ENCODE measurements at regions of chr11 and their contacts with region 1.

Region 1: DNA sequence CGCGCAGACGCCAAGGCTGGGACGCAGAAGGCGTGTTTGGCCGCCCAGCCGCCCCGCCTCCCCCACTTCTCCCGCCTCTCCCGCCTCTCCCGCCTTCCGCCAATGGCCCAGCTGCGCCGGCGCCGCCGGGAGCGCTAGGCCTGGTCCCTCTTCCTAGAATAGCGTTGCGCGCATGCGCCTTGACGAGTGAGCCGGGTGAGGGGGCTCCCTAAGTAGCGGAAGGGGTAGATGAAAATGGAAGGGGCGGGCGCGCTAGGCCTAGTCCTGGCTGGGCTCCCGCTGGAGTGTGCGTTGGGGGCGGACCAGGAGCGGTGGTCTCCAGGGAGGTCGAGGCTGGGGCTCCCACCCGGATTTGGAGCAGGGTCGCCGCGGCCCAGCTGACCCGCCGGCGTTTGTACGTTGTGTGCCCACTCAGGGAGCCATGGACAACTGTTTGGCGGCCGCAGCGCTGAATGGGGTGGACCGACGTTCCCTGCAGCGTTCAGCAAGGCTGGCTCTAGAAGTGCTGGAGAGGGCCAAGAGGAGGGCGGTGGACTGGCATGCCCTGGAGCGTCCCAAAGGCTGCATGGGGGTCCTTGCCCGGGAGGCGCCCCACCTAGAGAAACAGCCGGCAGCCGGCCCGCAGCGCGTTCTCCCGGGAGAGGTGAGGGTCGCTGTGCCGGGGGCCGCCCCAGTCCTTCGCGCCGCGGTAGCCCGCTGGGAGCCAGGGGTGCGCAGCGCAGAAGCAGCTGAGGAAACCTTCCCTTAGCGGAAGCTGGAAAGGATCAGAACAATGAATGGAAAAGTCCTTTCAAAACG is at the start of gene AKIP1:
- DNase-seq: peak; percentile 96 to 98
- ATAC-seq: peak; percentile 97 to 98 (median 98)
- H3K4me3 ChIP-seq: peak within 1 kb of the TSS; percentile 99
- H3K27ac ChIP-seq: peak within 1 kb of the TSS; percentile 89
- H3K4me1 ChIP-seq: peaks cover 21% of the 10 kb centered on the region
- H3K27me3 ChIP-seq: no peaks in the 10 kb centered on the region
- CTCF ChIP-seq: no peak
- total RNA-seq, gene AKIP1: 11.3 to 22.7 (median 16.5) TPM

Region 2: DNA sequence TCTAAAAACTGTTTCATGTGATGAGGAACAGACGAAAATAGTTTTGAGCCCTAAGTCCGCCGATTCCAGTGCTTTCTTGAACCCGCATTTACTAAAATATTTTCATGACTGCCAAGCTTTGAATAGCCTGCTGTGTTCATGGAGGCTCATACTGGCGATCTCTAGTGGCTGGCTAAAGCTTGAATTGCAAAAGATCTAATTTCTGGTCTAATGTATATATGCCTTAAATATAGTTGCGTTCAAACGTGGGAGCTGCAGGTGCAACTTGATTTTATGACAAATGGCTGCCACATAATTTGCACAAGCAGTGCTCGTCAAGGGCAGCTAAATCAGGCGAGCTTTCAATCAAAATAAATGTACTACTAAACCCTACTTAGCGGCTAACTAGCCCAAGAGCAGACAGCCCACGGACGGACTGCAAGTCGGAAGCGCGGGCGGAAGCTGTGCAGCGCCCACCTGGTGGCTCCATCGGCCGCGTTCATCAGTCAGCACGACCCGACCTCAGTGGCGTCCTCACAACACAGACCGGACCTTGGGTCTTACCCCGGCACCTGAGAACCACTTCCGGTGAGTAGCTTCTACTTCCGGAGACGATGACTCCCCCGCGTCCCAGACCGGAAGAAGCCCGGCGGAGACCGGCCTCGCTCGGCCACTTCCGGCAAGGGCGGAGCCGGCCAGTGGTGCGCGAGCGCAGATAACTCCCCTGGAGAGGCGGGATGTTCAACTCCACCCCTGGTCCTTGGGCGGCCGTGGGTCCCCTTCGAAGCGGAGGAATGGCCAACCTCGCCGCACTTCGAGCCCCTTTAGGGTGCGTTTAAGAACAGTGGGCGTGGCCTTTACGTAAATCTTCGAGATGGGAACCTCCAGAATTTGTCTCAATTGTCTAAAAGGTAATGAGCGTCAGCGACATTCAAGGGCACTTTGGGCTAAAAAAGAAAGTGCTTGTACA is 222.5 kb before region 1 on chr11:
- intact Hi-C with region 1: loop called in 1 of 2 experiments (anchors 5 kb)
- DNase-seq: peak; percentile 95 to 98
- ATAC-seq: peak; percentile 95 to 98 (median 97)
- H3K4me3 ChIP-seq: peak overlapping the region; percentile 68
- H3K27ac ChIP-seq: peak overlapping the region; percentile 88
- H3K4me1 ChIP-seq: peaks cover 29% of the 10 kb centered on the region
- H3K27me3 ChIP-seq: no peaks in the 10 kb centered on the region
- CTCF ChIP-seq: peak; percentile 24

Region 3: DNA sequence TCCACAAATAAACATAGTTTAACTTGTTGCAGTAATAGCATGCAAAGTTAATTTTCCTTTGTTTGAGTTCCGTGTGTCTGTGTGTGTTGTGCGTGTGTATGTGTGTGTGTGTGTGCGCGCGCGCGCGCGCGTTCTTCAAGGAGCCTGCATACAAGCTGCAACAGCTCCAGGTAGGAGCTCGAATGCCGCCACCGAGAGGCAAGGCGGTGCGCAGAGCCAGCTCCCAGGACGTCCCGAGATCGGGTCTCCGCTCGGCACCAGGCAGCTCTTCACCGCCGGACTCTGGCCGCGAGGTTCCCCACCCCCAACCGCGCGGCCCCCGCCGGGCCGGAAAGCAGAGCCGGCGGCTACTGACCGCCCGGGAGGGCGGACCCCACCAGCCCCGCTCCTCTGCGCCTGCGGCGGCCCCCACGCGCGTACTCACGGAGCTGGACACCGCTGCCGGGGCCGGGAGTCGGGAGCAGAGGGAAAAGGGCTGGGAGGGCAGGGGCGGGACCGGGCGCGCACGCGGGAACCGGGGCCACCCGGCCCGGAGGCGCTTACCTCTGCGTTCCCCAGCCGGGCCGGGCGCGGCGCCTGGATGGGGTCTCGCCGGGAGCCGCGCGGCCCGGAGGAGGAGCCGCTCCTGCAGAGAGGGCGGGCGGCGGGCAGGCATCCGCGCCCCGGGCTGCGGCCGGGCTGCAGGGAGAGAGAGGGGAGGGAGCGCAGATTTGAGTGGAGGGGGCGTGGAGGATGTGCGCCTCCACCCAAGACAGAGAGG is 40.6 kb before region 1 on chr11:
- intact Hi-C with region 1: loop called in 1 of 2 experiments (anchors 5 kb)
- DNase-seq: peak; percentile 48 to 64
- ATAC-seq: peak; percentile 66 to 75 (median 71)
- H3K4me3 ChIP-seq: peak overlapping the region; percentile 90
- H3K27ac ChIP-seq: peak overlapping the region; percentile 79
- H3K4me1 ChIP-seq: peaks cover 8% of the 10 kb centered on the region
- H3K27me3 ChIP-seq: no peaks in the 10 kb centered on the region
- CTCF ChIP-seq: no peak

Region 4: DNA sequence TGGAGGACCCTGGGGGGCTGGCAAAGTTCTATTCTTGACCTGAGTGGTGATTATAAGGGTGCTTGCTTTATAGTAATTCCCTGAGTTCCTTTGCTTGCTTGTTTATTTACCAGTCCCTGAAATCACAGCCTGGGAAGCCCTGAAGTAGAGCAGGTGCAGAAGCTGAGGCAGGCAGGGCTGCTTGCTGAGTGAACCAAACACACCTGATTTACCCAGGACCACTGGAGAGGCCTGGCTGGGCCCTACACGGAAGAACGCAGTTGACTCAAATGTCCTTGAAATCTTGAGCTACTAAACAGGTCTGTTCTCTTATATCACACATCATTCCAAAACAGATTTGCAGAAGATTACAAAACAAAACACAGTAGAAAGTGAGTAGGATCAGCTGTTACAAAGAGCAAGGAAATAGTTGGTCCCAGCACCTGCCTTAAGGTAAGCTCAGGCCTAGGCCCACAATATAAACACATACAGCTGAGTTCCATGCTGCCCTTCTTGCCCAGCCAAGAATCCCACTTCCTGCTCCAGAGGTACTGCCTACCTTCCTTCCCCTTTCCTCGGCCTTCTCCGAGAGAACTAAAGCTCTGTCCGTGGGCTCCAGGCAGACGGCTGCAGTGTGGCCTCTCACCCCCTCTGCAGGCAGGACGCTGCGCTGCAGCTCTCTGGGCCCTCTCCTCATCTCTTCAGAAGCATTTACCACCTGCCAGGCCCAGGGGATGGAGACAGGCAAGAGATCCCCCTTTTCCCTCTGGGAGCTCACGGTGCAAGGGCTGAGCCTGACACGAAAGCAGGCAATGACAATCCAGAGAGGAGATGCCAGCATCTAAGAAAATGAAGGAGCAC is 226.3 kb after region 1 on chr11:
- intact Hi-C with region 1: loop called in 1 of 2 experiments (anchors 10 kb)
- DNase-seq: peak; percentile 70 to 77
- ATAC-seq: peak; percentile 89 to 97 (median 92)
- H3K4me3 ChIP-seq: no peak overlapping the region
- H3K27ac ChIP-seq: no peak overlapping the region
- H3K4me1 ChIP-seq: no peaks in the 10 kb centered on the region
- H3K27me3 ChIP-seq: no peaks in the 10 kb centered on the region
- CTCF ChIP-seq: peak; percentile 89

Region 5: DNA sequence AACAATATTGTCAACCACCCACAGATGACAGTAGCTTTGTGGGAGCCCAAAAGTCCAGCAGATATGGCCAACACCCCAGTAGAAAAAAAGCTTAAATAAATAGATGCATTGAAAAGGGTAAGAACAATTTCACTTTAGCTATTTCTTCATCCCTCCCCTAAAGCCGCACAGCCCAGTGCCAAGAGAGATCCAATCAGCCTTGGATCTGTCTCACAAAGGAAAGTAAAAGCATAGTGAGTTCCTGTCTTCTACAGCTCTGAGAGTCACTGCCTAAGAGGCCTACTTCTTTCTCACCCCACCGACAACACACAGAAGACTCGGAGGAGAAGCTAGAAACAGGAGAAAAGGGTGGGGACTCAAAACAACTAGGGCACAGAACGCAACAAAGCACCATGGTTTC is 1186.4 kb after region 1 on chr11:
- intact Hi-C with region 1: no loop called
- DNase-seq: no peak
- ATAC-seq: no peak
- H3K4me3 ChIP-seq: no peak overlapping the region
- H3K27ac ChIP-seq: no peak overlapping the region
- H3K4me1 ChIP-seq: no peaks in the 10 kb centered on the region
- H3K27me3 ChIP-seq: no peaks in the 10 kb centered on the region
- CTCF ChIP-seq: no peak